Prostate gland (tissue), 2 donors: ENCODE measurements at regions of chr9 and their contacts with region 1.

Region 1: GRCh38 chr9:131046581-131047202 is 37.7 kb downstream of the LAMC3 start:
- DNase-seq: peak; percentile 27
- H3K4me3 ChIP-seq: no peak overlapping the region
- H3K27ac ChIP-seq: no peak overlapping the region
- H3K4me1 ChIP-seq: no peaks in the 10 kb centered on the region
- H3K27me3 ChIP-seq: no peaks in the 10 kb centered on the region
- CTCF ChIP-seq: peak; percentile 62 to 89 (median 80)
- POLR2A ChIP-seq: no peak

Region 2: GRCh38 chr9:130186839-130187522 is 859.7 kb before region 1 on chr9:
- intact Hi-C with region 1: no loop called
- DNase-seq: no peak
- H3K4me3 ChIP-seq: peak overlapping the region; percentile 12 to 16
- H3K27ac ChIP-seq: peak overlapping the region; percentile 75 to 83
- H3K4me1 ChIP-seq: peaks cover 6% of the 10 kb centered on the region
- H3K27me3 ChIP-seq: no peaks in the 10 kb centered on the region
- CTCF ChIP-seq: no peak
- POLR2A ChIP-seq: peak; percentile 46

Region 3: GRCh38 chr9:130707225-130707976 is 339.3 kb before region 1 on chr9:
- intact Hi-C with region 1: loop called (anchors 5 kb)
- DNase-seq: peak; percentile 62
- H3K4me3 ChIP-seq: no peak overlapping the region
- H3K27ac ChIP-seq: no peak overlapping the region
- H3K4me1 ChIP-seq: no peaks in the 10 kb centered on the region
- H3K27me3 ChIP-seq: no peaks in the 10 kb centered on the region
- CTCF ChIP-seq: peak; percentile 58 to 78 (median 62)
- POLR2A ChIP-seq: no peak

Region 4: DNA sequence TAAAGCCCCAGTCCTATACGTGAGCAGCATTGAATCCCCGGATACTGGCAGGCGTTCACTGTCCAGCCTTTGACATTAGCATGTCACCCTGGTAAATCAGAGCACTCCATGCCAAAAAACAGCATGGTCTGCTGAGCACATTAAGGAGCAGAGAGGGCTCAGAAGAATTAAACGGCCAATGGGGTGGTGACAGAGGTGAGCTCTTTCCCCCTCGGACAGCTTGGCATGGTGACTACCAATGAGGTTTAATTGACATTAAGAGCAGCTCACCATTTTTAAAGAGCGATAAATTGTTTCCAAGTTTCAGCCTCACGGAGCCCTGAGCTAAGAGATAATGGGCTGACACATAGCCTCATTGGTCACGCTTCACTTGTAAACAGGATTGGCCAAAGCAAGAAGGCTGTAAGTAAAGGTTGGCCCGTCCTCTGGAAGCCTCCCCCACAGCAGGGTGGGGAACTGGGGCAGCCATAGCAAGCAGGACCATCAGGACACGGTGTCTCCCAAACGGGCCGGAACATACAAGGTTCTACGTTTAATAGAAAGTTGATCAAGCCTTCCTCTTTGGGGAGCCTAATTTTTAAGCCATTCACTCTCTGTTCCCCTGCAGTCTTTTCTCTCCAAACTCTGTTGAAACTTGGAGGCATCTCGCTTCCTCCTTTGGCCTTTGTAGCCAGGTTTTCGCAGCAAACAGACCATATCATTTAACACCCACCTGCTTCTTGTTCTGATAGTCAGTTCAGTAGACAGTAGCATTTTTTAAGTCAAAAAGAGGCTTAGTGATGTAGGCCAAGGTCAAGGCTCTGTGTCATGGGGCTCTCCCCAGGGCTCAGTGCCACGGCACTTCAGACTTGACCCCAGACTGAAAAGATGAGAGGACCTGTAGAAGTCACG is 176.0 kb before region 1 on chr9:
- intact Hi-C with region 1: loop called (anchors 5 kb)
- DNase-seq: no peak
- H3K4me3 ChIP-seq: no peak overlapping the region
- H3K27ac ChIP-seq: no peak overlapping the region
- H3K4me1 ChIP-seq: peaks cover 20% of the 10 kb centered on the region
- H3K27me3 ChIP-seq: no peaks in the 10 kb centered on the region
- CTCF ChIP-seq: no peak
- POLR2A ChIP-seq: no peak

Region 5: GRCh38 chr9:130927995-130928900 is 118.4 kb before region 1 on chr9:
- intact Hi-C with region 1: no loop called
- DNase-seq: peak; percentile 34
- H3K4me3 ChIP-seq: no peak overlapping the region
- H3K27ac ChIP-seq: no peak overlapping the region
- H3K4me1 ChIP-seq: peaks cover 4% of the 10 kb centered on the region
- H3K27me3 ChIP-seq: no peaks in the 10 kb centered on the region
- CTCF ChIP-seq: no peak
- POLR2A ChIP-seq: no peak

Region 6: DNA sequence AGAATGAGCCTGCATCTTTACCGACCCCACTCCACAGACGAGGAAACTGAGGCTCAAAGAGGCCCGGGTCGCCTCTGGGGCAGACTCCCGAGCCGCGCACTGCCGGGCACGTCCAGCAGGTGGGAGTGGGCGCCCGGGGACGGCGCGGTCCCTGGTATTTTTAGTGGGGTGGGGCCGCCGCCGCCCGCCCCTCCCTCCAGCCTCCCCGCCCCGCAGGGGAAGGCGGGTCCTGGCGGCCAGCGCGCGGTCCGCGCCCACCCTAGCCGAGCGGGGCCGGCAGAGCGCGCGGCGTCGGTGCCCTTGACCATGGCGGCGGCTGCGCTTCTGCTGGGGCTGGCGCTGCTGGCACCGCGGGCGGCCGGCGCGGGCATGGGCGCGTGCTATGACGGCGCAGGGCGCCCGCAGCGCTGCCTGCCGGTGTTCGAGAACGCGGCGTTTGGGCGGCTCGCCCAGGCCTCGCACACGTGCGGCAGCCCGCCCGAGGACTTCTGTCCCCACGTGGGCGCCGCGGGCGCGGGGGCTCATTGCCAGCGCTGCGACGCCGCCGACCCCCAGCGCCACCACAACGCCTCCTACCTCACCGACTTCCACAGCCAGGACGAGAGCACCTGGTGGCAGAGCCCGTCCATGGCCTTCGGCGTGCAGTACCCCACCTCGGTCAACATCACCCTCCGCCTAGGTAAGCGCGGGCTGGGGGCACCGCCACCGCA is 37.6 kb before region 1 on chr9 and contains the start of gene LAMC3:
- intact Hi-C with region 1: loop called (anchors 2 kb)
- DNase-seq: no peak
- H3K4me3 ChIP-seq: peak within 1 kb of the TSS; percentile 16 to 23
- H3K27ac ChIP-seq: no peak within 1 kb of the TSS
- H3K4me1 ChIP-seq: no peaks in the 10 kb centered on the region
- H3K27me3 ChIP-seq: no peaks in the 10 kb centered on the region
- CTCF ChIP-seq: peak in 3 of 4 experiments; percentile 31 to 55 (median 38)
- POLR2A ChIP-seq: no peak
- total RNA-seq, gene LAMC3: 0.55 to 156 TPM

Region 7: GRCh38 chr9:131149688-131150053 is 103.0 kb after region 1 on chr9:
- intact Hi-C with region 1: no loop called
- DNase-seq: no peak
- H3K4me3 ChIP-seq: no peak overlapping the region
- H3K27ac ChIP-seq: no peak overlapping the region
- H3K4me1 ChIP-seq: no peaks in the 10 kb centered on the region
- H3K27me3 ChIP-seq: no peaks in the 10 kb centered on the region
- CTCF ChIP-seq: no peak
- POLR2A ChIP-seq: no peak